T-cell (primary cell): ENCODE measurements at regions of chr1 and their contacts with region 1.

Region 1: DNA sequence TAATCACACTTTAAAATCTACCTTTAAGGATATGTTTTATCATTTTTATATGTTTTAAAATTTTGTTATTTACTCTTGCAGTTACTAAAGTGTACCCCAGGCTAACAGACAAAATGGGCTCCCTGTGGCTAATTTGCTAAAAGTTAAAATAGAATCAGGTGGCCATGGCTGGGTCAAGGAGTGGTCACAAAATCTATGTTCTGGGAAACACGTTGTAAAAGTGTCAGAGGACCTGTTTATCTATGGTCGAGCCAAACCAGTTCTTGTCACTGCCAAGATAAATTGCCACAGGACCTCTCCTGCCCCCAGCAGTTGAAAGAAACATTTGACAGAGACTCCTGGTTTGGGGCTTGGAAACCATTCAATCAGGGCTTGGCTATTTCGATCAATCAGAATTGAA is 21.2 kb upstream of the TTLL7 start:
- DNase-seq: no peak
- ATAC-seq: no peak
- H3K4me3 ChIP-seq: no peak overlapping the region
- H3K4me3 Mint-ChIP-seq: no peak overlapping the region
- H3K27ac ChIP-seq: no peak overlapping the region
- H3K27ac Mint-ChIP-seq: no peak overlapping the region
- H3K4me1 ChIP-seq: no peaks in the 10 kb centered on the region
- H3K4me1 Mint-ChIP-seq: no peaks in the 10 kb centered on the region
- H3K27me3 ChIP-seq: no peaks in the 10 kb centered on the region
- H3K27me3 Mint-ChIP-seq: peaks cover 11 to 14% of the 10 kb centered on the region in 2 donors

Region 2: GRCh38 chr1:84042461-84042860 is 22.3 kb after region 1 on chr1:
- CTCF ChIA-PET with region 1: interaction called in 1 of 2 experiments, 11 read pairs
- POLR2A ChIA-PET with region 1: no interaction called
- DNase-seq: no peak
- ATAC-seq: no peak
- H3K4me3 ChIP-seq: no peak overlapping the region
- H3K4me3 Mint-ChIP-seq: no peak overlapping the region
- H3K27ac ChIP-seq: no peak overlapping the region
- H3K27ac Mint-ChIP-seq: no peak overlapping the region
- H3K4me1 ChIP-seq: no peaks in the 10 kb centered on the region
- H3K4me1 Mint-ChIP-seq: no peaks in the 10 kb centered on the region
- H3K27me3 ChIP-seq: peaks cover 0 to 6% of the 10 kb centered on the region in 2 experiments
- H3K27me3 Mint-ChIP-seq: peaks cover 11 to 12% of the 10 kb centered on the region in 2 donors